ENCODE measurements at regions of chr16 and their contacts with region 1.

Region 1: DNA sequence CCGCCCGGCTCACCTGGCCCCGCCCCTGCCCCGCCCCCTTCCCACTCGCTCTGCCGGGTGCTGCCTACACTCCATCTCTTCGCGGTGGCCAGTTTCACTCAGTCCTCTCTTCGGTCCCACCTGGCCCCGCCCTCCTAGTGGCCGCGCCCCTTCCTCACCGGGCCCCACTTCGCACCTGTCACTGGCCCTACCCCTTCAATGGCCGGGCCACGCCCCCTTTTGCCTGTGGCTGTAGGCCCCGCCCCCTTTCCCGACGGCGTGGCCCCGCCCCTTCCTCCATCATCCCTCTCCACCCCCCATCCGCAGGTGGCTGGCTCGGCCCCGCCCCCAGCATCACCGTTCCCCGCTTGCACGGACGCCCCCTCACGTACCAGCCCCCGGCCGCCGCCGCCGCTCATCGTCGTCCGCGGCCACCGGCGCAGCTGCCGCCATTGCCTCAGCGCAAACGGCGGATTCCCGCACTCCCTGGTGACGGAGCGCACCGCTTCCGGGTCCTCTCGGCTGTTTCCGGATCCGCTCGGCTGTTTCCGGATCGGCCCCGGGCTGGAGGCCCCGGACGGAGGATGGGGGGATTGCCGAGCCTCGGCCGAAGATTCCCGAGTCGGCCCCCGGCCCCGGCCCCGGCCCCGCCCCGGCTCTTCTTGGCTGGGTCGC is at the start of gene RABEP2:
- DNase-seq: peak; percentile 95 to 100
- H3K4me3 ChIP-seq: peak within 1 kb of the TSS; percentile 58
- H3K27ac ChIP-seq: peak within 1 kb of the TSS; percentile 87
- H3K4me1 ChIP-seq: peaks cover 13% of the 10 kb centered on the region
- H3K27me3 ChIP-seq: no peaks in the 10 kb centered on the region
- CTCF ChIP-seq: no peak
- total RNA-seq, gene RABEP2: 48.5 and 70.5 TPM in 2 replicates

Region 2: GRCh38 chr16:28846080-28846932 is 78.6 kb before region 1 on chr16 and contains the start of gene TUFM:
- CTCF ChIA-PET with region 1: no interaction called
- POLR2A ChIA-PET with region 1: interaction called, 3 read pairs
- intact Hi-C with region 1: loop called (anchors 1 kb)
- DNase-seq: peak; percentile 97 to 99
- H3K4me3 ChIP-seq: peak within 1 kb of the TSS; percentile 89
- H3K27ac ChIP-seq: peak within 1 kb of the TSS; percentile 35
- H3K4me1 ChIP-seq: peaks cover 8% of the 10 kb centered on the region
- H3K27me3 ChIP-seq: no peaks in the 10 kb centered on the region
- CTCF ChIP-seq: peak; percentile 69
- total RNA-seq, gene TUFM: 342 and 448 TPM in 2 replicates

Region 3: GRCh38 chr16:28863929-28864793 is 60.7 kb before region 1 on chr16:
- CTCF ChIA-PET with region 1: interaction called, 13 read pairs
- POLR2A ChIA-PET with region 1: interaction called, 15 read pairs
- intact Hi-C with region 1: no loop called
- DNase-seq: peak in 1 of 2 experiments; percentile 18
- H3K4me3 ChIP-seq: peak overlapping the region; percentile 67
- H3K27ac ChIP-seq: peak overlapping the region; percentile 66
- H3K4me1 ChIP-seq: peaks cover 20% of the 10 kb centered on the region
- H3K27me3 ChIP-seq: no peaks in the 10 kb centered on the region
- CTCF ChIP-seq: no peak

Region 4: GRCh38 chr16:28898942-28899341 is 25.9 kb before region 1 on chr16:
- CTCF ChIA-PET with region 1: no interaction called
- POLR2A ChIA-PET with region 1: no interaction called
- intact Hi-C with region 1: no loop called
- DNase-seq: no peak
- H3K4me3 ChIP-seq: no peak overlapping the region
- H3K27ac ChIP-seq: no peak overlapping the region
- H3K4me1 ChIP-seq: no peaks in the 10 kb centered on the region
- H3K27me3 ChIP-seq: no peaks in the 10 kb centered on the region
- CTCF ChIP-seq: no peak

Region 5: GRCh38 chr16:28935924-28936783 is 11.3 kb after region 1 on chr16:
- CTCF ChIA-PET with region 1: no interaction called
- POLR2A ChIA-PET with region 1: interaction called, 8 read pairs
- intact Hi-C with region 1: loop called (anchors 1 kb)
- DNase-seq: peak; percentile 72 to 96
- H3K4me3 ChIP-seq: peak overlapping the region; percentile 30; the same call in 1 of the 2 replicates
- H3K27ac ChIP-seq: no peak overlapping the region
- H3K4me1 ChIP-seq: no peaks in the 10 kb centered on the region
- H3K27me3 ChIP-seq: no peaks in the 10 kb centered on the region
- CTCF ChIP-seq: no peak

Region 6: DNA sequence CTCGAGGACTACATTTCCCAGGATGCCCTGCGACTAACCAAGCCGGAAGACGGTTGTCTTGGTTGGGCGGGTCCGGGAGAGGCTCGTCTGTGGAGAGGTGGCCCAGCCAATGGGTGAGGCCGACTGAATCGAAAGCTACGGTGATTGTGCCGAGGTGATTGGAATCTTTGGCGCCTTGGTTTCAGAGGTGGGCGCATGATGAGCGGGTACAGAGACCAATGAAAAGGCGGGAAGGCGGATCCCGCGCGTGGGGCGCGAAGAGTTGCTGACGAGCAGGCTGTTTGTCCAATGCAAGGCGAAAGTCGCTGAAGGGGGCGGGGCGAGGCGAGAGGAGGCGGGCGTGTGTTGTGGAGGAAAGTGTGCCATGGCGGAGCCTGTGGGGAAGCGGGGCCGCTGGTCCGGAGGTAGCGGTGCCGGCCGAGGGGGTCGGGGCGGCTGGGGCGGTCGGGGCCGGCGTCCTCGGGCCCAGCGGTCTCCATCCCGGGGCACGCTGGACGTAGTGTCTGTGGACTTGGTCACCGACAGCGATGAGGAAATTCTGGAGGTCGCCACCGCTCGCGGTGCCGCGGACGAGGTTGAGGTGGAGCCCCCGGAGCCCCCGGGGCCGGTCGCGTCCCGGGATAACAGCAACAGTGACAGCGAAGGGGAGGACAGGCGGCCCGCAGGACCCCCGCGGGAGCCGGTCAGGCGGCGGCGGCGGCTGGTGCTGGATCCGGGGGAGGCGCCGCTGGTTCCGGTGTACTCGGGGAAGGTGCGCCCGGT is 26.0 kb after region 1 on chr16 and contains the start of gene NFATC2IP:
- CTCF ChIA-PET with region 1: no interaction called
- POLR2A ChIA-PET with region 1: interaction called, 54 read pairs
- intact Hi-C with region 1: no loop called
- DNase-seq: peak; percentile 100
- H3K4me3 ChIP-seq: peak within 1 kb of the TSS; percentile 84
- H3K27ac ChIP-seq: peak within 1 kb of the TSS; percentile 38; the same call in 1 of the 2 replicates
- H3K4me1 ChIP-seq: peaks cover 16% of the 10 kb centered on the region
- H3K27me3 ChIP-seq: no peaks in the 10 kb centered on the region
- CTCF ChIP-seq: no peak
- total RNA-seq, gene NFATC2IP: 72.3 and 73.0 TPM in 2 replicates

Region 7: DNA sequence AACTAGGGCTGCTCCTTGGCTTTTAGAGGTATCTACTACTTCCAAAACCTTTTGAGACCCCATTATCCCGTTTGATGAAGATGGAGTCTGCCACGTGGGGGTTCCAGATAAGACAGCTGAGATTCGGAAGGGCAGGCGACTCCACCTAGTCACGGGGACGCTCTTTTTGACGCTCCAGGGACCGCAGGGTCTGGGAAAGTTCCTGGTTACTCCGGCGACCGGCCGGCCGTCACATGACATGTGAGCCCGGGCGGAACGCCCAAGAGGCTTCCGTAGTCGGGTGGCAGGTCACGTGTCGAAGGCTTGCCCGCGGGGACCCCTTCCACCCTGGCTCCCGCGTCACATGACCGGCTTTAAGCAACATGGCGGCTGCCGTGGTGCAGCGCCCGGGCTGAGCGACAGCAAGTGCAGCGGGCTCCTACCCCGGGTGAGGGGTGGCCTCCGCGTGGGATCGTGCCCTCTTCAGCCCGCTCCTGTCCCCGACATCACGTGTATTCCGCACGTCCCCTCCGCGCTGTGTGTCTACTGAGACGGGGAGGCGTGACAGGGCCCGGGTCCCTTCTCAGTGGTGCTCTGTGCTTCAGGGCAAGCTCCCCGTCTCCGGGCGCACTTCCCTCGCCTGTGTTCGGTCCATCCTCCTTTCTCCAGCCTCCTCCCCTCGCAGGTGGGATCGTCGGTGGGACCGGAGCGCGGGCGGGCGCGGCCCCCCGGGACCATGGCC is 49.7 kb after region 1 on chr16 and contains the start of gene SPNS1:
- CTCF ChIA-PET with region 1: no interaction called
- POLR2A ChIA-PET with region 1: no interaction called
- intact Hi-C with region 1: no loop called
- DNase-seq: peak; percentile 89 to 98
- H3K4me3 ChIP-seq: peak within 1 kb of the TSS; percentile 94
- H3K27ac ChIP-seq: peak within 1 kb of the TSS; percentile 62
- H3K4me1 ChIP-seq: peaks cover 7% of the 10 kb centered on the region
- H3K27me3 ChIP-seq: no peaks in the 10 kb centered on the region
- CTCF ChIP-seq: no peak
- total RNA-seq, gene SPNS1: 72.0 and 96.2 TPM in 2 replicates

Region 8: GRCh38 chr16:29198731-29199521 is 274.1 kb after region 1 on chr16:
- CTCF ChIA-PET with region 1: no interaction called
- POLR2A ChIA-PET with region 1: no interaction called
- intact Hi-C with region 1: no loop called
- DNase-seq: no peak
- H3K4me3 ChIP-seq: no peak overlapping the region
- H3K27ac ChIP-seq: no peak overlapping the region
- H3K4me1 ChIP-seq: no peaks in the 10 kb centered on the region
- H3K27me3 ChIP-seq: no peaks in the 10 kb centered on the region
- CTCF ChIP-seq: no peak